Heart right ventricle (tissue), 16 donors: ENCODE measurements at regions of chr7 and their contacts with region 1.

Region 1: DNA sequence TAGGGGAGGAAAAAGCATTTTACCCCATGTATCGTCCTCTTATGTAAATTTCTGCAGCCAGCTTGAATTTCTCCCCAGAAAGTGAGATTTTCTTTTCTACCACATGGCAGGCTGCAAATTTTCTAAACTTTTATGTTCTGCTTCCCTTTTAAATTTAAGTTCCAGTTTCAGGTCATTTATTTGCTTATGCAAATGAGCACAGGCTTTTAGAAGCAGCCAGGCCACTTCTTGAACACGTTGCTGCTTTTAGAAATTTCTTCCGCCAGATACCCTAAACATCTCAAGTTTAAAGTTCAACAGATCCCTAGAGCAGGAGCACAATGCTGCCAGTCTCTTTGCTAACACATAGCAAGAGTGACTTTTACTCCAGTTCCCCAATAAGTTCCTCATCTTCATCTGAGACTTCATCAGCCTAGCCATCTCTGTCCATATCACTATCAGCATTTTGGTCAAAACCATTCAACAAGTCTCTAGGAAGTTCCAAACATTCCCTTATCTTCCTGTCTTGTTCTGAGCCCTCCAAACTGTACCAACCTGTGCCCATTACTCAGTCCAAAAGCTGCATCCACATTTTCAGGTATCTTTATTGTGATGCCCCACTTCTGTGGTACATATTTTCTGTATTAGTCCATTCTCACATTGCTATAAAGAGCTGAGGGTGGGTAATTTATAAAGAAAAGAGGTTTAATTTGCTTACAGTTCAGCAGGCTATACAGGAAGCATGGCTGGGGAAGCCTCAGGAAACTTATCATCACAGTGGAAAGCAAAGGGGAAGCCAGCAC is 16.3 kb downstream of the EZH2 start:
- DNase-seq: no peak
- ATAC-seq: no peak
- H3K4me3 ChIP-seq: no peak overlapping the region
- H3K27ac ChIP-seq: no peak overlapping the region
- H3K4me1 ChIP-seq: peaks cover 0 to 10% (median 0%) of the 10 kb centered on the region in 9 donors
- H3K27me3 ChIP-seq: no peaks in the 10 kb centered on the region
- CTCF ChIP-seq: no peak

Region 2: DNA sequence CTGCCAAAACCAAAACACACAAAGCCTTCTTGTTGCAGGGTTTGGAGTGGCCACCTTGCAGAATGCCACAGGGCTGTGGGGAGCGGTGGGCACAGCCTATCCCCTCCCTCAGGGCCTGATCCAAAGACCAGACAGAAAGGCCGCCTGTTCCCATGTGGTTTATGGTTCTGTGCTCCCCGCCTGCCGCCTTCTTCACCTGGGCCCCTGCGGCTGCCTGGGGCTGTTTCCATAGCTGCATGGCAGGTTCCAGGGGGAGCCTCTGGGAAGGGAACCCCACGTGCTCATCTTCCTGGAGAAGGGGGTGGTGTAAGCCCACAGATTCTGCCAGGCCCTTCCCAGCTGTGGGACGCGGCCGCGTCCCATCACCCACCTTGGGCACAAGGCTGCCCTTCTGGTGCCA is 87.0 kb after region 1 on chr7:
- intact Hi-C with region 1: loop called in 2 of 10 experiments (anchors 10 kb)
- DNase-seq: no peak
- ATAC-seq: no peak
- H3K4me3 ChIP-seq: no peak overlapping the region
- H3K27ac ChIP-seq: no peak overlapping the region
- H3K4me1 ChIP-seq: no peaks in the 10 kb centered on the region
- H3K27me3 ChIP-seq: no peaks in the 10 kb centered on the region
- CTCF ChIP-seq: no peak